Common myeloid progenitor, CD34-positive (primary cell): ENCODE measurements at regions of chr7 and their contacts with region 1.

Region 1: GRCh38 chr7:20172736-20173334 is 44.3 kb downstream of the MACC1 start:
- DNase-seq: peak; percentile 61 to 74 (median 67)
- H3K4me3 ChIP-seq: no peak overlapping the region
- H3K27ac ChIP-seq: no peak overlapping the region
- H3K4me1 ChIP-seq: peaks cover 0 to 5% (median 0%) of the 10 kb centered on the region in 4 experiments
- H3K27me3 ChIP-seq: no peaks in the 10 kb centered on the region

Region 2: DNA sequence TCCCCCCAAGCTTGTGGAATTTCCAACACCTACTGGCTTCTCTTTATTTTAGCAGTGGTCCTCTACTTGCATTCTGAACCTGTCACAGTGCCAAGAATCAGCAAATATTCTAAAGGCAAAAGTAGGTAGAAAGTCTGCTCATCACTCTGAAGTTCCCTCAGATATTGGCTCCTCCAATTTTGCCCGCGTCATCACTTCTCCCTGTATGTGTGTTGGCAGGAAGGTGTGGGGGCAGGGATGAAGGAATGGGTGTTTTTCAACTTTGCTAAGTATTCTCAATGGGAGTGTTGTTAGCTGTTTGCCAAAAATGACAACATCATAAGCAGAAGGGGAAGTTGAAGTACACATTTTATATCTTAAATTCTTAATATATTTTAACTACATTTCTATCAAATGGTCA is 690.2 kb before region 1 on chr7:
- CTCF ChIA-PET with region 1: no interaction called
- POLR2A ChIA-PET with region 1: no interaction called
- DNase-seq: peak in 2 of 3 donors; percentile 6 to 13
- H3K4me3 ChIP-seq: no peak overlapping the region
- H3K27ac ChIP-seq: no peak overlapping the region
- H3K4me1 ChIP-seq: no peaks in the 10 kb centered on the region
- H3K27me3 ChIP-seq: no peaks in the 10 kb centered on the region

Region 3: GRCh38 chr7:19982841-19983835 is 189.7 kb before region 1 on chr7:
- CTCF ChIA-PET with region 1: interaction called, 30 read pairs
- POLR2A ChIA-PET with region 1: no interaction called
- DNase-seq: peak; percentile 68 to 80 (median 79)
- H3K4me3 ChIP-seq: no peak overlapping the region
- H3K27ac ChIP-seq: no peak overlapping the region
- H3K4me1 ChIP-seq: no peaks in the 10 kb centered on the region
- H3K27me3 ChIP-seq: no peaks in the 10 kb centered on the region

Region 4: DNA sequence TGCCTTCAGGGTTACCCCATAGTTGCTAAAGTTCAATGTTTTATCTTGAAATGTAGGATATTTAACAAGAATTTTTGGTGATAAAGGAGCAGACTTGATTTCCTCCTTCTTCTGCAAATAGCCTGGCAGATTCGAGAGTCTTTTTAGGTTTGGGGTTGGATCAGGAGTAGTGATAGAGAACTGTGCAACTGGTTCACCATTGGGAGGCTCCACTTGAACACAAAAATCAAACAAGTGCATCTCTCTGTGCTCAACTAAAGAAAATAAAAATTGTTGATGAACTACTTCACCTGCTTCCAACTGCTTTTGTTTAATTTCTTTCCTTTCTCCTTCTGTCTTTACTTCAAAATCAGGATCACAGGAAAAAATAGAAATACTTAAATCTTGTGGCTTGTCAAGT is 14.2 kb before region 1 on chr7:
- CTCF ChIA-PET with region 1: interaction called, 24 read pairs
- POLR2A ChIA-PET with region 1: no interaction called
- DNase-seq: peak; percentile 39 to 54 (median 51)
- H3K4me3 ChIP-seq: peak overlapping the region in 1 of 7 experiments; percentile 2
- H3K27ac ChIP-seq: peak overlapping the region in 1 of 2 experiments; percentile 19
- H3K4me1 ChIP-seq: peaks cover 6 to 44% (median 11%) of the 10 kb centered on the region in 4 experiments
- H3K27me3 ChIP-seq: no peaks in the 10 kb centered on the region

Region 5: GRCh38 chr7:20199015-20199737 is 26.3 kb after region 1 on chr7:
- CTCF ChIA-PET with region 1: interaction called, 11 read pairs
- POLR2A ChIA-PET with region 1: no interaction called
- DNase-seq: peak; percentile 88 to 98 (median 97)
- H3K4me3 ChIP-seq: peak overlapping the region in 5 of 7 experiments; percentile 20 to 64 (median 42)
- H3K27ac ChIP-seq: peak overlapping the region; percentile 47 to 80
- H3K4me1 ChIP-seq: peaks cover 30 to 55% (median 42%) of the 10 kb centered on the region in 4 experiments
- H3K27me3 ChIP-seq: no peaks in the 10 kb centered on the region

Region 6: GRCh38 chr7:20219446-20220292 is 46.8 kb after region 1 on chr7:
- CTCF ChIA-PET with region 1: interaction called, 34 read pairs
- POLR2A ChIA-PET with region 1: no interaction called
- DNase-seq: peak; percentile 99 to 100 (median 100)
- H3K4me3 ChIP-seq: peak overlapping the region in 2 of 7 experiments; percentile 41 to 46
- H3K27ac ChIP-seq: peak overlapping the region; percentile 90 to 92
- H3K4me1 ChIP-seq: peaks cover 41 to 82% (median 60%) of the 10 kb centered on the region in 4 experiments
- H3K27me3 ChIP-seq: no peaks in the 10 kb centered on the region

Region 7: DNA sequence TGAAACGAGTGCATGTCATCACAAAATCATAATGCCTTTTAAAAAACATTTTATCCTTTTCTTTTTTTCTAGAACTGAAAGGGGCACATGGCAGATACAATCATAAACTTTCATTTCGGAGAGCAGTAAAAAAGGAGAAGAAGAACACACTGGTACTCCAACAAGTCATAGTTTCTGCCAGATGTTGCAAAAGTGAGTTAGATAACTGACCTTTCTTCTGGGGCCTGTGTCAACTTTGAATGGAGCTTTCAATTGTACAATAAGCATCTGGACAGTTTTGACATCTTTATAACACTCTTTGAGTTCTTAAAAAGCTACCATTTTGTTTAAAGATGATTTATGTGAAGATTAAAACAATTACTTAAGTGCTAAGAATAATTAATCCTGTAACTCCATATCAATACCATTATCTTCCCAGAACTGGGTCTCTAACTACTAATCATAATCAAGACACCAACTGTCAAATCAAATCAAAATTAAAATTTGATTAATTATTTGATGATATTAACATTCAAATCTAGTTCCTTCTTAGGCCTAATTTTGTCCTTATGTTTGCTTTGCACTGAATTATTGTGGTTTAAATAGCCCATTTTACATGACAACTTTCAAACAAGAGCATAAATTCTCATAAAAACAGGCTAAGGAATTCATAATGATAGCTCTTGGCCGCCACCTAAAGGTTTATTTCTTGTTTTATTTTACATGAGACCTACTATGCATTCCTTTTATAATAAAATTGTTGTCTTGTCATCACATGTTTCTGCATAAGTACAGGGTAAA is 138.3 kb after region 1 on chr7:
- CTCF ChIA-PET with region 1: interaction called, 11 read pairs
- POLR2A ChIA-PET with region 1: no interaction called
- DNase-seq: peak; percentile 63 to 83 (median 82)
- H3K4me3 ChIP-seq: no peak overlapping the region
- H3K27ac ChIP-seq: no peak overlapping the region
- H3K4me1 ChIP-seq: peaks cover 3 to 17% (median 5%) of the 10 kb centered on the region in 4 experiments
- H3K27me3 ChIP-seq: no peaks in the 10 kb centered on the region

Region 8: GRCh38 chr7:20598459-20599309 is 425.8 kb after region 1 on chr7:
- CTCF ChIA-PET with region 1: interaction called, 15 read pairs
- POLR2A ChIA-PET with region 1: no interaction called
- DNase-seq: peak; percentile 74 to 86 (median 85)
- H3K4me3 ChIP-seq: peak overlapping the region in 5 of 7 experiments; percentile 11 to 68 (median 37)
- H3K27ac ChIP-seq: no peak overlapping the region
- H3K4me1 ChIP-seq: peaks cover 2 to 26% (median 16%) of the 10 kb centered on the region in 4 experiments
- H3K27me3 ChIP-seq: no peaks in the 10 kb centered on the region